Calu3 (cell line): ENCODE measurements at regions of chr19 and their contacts with region 1.

Region 1: GRCh38 chr19:35509861-35510625 is 3.4 kb downstream of the DMKN start:
- DNase-seq: peak; percentile 98
- H3K4me3 Mint-ChIP-seq: peak overlapping the region; percentile 93
- H3K27ac Mint-ChIP-seq: peak overlapping the region; percentile 94
- H3K4me1 Mint-ChIP-seq: peaks cover 20% of the 10 kb centered on the region
- H3K27me3 Mint-ChIP-seq: peaks cover 31% of the 10 kb centered on the region
- CTCF ChIP-seq: peak; percentile 98

Region 2: GRCh38 chr19:35528218-35529038 is 18.4 kb after region 1 on chr19 and contains the start of gene SBSN:
- CTCF ChIA-PET with region 1: interaction called, 14 read pairs
- intact Hi-C with region 1: no loop called
- DNase-seq: no peak
- H3K4me3 Mint-ChIP-seq: no peak within 1 kb of the TSS
- H3K27ac Mint-ChIP-seq: no peak within 1 kb of the TSS
- H3K4me1 Mint-ChIP-seq: no peaks in the 10 kb centered on the region
- H3K27me3 Mint-ChIP-seq: peaks cover 92% of the 10 kb centered on the region
- CTCF ChIP-seq: no peak
- total RNA-seq, gene SBSN: not detected in 2 replicates

Region 3: GRCh38 chr19:35545001-35545911 is 35.2 kb after region 1 on chr19 and contains the start of gene TMEM147:
- CTCF ChIA-PET with region 1: interaction called, 4 read pairs
- intact Hi-C with region 1: loop called (anchors 5 kb)
- DNase-seq: peak; percentile 98
- H3K4me3 Mint-ChIP-seq: peak within 1 kb of the TSS; percentile 96
- H3K27ac Mint-ChIP-seq: peak within 1 kb of the TSS; percentile 87
- H3K4me1 Mint-ChIP-seq: peaks cover 28% of the 10 kb centered on the region
- H3K27me3 Mint-ChIP-seq: no peaks in the 10 kb centered on the region
- CTCF ChIP-seq: no peak
- total RNA-seq, gene TMEM147: 114 and 118 TPM in 2 replicates

Region 4: GRCh38 chr19:35648017-35648961 is 138.2 kb after region 1 on chr19 and contains the start of gene COX6B1:
- CTCF ChIA-PET with region 1: interaction called, 11 read pairs
- intact Hi-C with region 1: no loop called
- DNase-seq: peak; percentile 94
- H3K4me3 Mint-ChIP-seq: peak within 1 kb of the TSS; percentile 88
- H3K27ac Mint-ChIP-seq: peak within 1 kb of the TSS; percentile 78
- H3K4me1 Mint-ChIP-seq: peaks cover 28% of the 10 kb centered on the region
- H3K27me3 Mint-ChIP-seq: no peaks in the 10 kb centered on the region
- CTCF ChIP-seq: no peak
- total RNA-seq, gene COX6B1: 488 and 497 TPM in 2 replicates